Naive thymus-derived CD4-positive, alpha-beta T cell (primary cell): ENCODE measurements at regions of chr6 and their contacts with region 1.

Region 1: DNA sequence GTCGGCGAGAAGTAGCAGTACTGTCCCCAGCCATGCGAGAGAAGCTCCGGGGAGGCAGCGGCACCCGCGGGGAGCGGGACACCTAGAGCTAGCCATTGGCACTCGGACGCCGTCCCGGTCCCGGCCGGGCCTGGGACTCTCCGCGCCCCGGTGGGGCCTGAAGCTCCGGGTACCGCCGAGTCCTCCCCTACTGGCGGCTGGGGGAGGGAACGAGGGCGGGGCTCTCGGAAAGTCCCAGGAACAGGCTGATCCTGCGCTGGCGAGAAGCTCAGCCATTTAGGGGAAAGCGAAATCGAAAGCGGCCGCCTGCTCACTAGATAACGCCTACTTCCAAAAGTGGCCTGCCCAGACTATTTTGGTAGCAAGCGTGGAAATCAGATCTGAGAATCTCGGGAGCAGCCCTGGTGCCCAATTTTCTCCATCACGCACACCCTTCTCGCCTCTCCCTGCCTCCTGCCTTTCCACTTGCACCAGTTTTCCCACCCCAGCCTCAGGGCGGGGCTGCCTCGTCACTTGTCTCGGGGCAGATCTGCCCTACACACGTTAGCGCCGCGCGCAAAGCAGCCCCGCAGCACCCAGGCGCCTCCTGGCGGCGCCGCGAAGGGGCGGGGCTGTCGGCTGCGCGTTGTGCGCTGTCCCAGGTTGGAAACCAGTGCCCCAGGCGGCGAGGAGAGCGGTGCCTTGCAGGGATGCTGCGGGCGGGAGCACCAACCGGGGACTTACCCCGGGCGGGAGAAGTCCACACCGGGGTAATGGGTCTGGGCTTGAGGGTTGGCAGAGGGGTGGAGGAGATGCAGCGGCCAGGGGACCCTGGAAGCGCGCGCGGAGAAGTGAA is at the starts of genes PSMB9 and TAP1:
- DNase-seq: peak; percentile 92 to 97 (median 94)
- ATAC-seq: peak; percentile 92
- H3K4me3 ChIP-seq: peak within 1 kb of the TSS; percentile 91
- H3K4me3 Mint-ChIP-seq: peak within 1 kb of the TSS; percentile 96 to 100 (median 100)
- H3K27ac ChIP-seq: peak within 1 kb of the TSS; percentile 100
- H3K27ac Mint-ChIP-seq: peak within 1 kb of the TSS; percentile 97 to 100 (median 100)
- H3K4me1 ChIP-seq: peaks cover 45 to 57% of the 10 kb centered on the region in 2 donors
- H3K4me1 Mint-ChIP-seq: peaks cover 61 to 80% (median 72%) of the 10 kb centered on the region in 7 donors
- H3K27me3 ChIP-seq: no peaks in the 10 kb centered on the region
- H3K27me3 Mint-ChIP-seq: no peaks in the 10 kb centered on the region
- total RNA-seq, gene PSMB9: 70.3 to 452 (median 90.5) TPM
- total RNA-seq, gene TAP1: 92.1 to 500 (median 103) TPM

Region 2: DNA sequence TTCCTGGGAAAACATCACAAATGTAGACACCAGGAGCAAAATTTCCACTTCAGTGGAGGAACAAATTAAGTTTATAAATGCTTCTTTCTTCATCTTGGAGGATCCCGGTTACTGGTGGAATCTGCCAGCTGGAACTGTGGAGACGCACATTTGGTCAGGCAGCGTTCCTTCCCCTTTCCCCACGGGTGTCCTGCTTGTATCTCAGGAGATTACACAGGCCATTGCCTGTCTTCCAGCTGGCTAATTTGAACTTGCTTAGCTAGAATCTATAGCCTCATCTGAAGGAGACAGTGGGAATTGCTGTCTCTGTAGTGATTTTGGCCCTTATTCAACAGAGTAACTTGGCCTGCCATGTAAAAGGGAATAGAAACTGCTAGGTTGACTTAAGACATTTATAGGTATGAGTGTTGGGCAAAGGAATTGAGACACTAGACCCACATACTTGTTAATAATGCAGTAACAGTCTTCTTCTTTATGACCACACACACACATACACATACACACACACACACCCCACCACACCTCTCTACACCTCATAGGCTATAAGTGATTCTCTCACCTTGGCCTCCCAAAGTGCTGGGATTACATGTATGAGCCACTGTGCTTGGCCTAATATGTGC is 516.5 kb before region 1 on chr6:
- CTCF ChIA-PET with region 1: no interaction called
- POLR2A ChIA-PET with region 1: no interaction called
- intact Hi-C with region 1: no loop called
- DNase-seq: no peak
- ATAC-seq: no peak
- H3K4me3 ChIP-seq: no peak overlapping the region
- H3K4me3 Mint-ChIP-seq: no peak overlapping the region
- H3K27ac ChIP-seq: no peak overlapping the region
- H3K27ac Mint-ChIP-seq: no peak overlapping the region
- H3K4me1 ChIP-seq: no peaks in the 10 kb centered on the region
- H3K4me1 Mint-ChIP-seq: peaks cover 0 to under 1% (median 0%) of the 10 kb centered on the region in 7 donors
- H3K27me3 ChIP-seq: no peaks in the 10 kb centered on the region
- H3K27me3 Mint-ChIP-seq: peaks cover 0 to 60% (median 5%) of the 10 kb centered on the region in 5 donors

Region 3: DNA sequence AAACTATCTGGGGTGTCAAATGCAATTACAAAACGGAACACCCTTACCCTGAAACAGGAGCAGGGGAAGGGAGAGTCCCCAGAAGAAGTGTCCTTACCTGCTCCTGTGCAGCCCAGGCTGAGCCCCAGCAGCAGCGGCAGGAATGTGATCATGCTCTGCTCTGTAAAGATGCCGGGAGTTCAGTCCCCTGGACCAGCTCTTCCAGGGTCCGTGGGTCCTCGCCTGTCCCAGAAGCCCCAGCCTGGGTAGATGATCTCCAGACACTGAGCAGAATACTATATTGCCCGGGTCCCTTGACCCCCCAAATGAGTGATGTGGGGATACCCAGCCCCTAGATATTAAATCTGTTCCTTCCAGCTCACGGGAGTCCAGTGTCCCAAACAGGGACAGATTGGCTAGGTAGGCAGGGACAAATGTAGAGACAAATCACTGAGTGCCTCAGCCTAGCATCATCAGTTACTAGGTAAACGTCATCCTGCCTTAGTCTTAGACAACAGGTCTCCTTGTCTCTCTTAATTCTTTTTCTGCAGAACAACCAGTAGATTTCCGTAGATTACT is 87.0 kb after region 1 on chr6 and contains the start of gene HLA-DMB:
- CTCF ChIA-PET with region 1: interaction called, 12 read pairs
- POLR2A ChIA-PET with region 1: interaction called, 15 read pairs
- intact Hi-C with region 1: no loop called
- DNase-seq: peak in 7 of 9 donors; percentile 64 to 80 (median 74)
- ATAC-seq: peak; percentile 86
- H3K4me3 ChIP-seq: peak within 1 kb of the TSS; percentile 66
- H3K4me3 Mint-ChIP-seq: peak within 1 kb of the TSS; percentile 85 to 97 (median 94)
- H3K27ac ChIP-seq: peak within 1 kb of the TSS; percentile 75
- H3K27ac Mint-ChIP-seq: peak within 1 kb of the TSS; percentile 95 to 98 (median 96)
- H3K4me1 ChIP-seq: peaks cover 50 to 55% of the 10 kb centered on the region in 2 donors
- H3K4me1 Mint-ChIP-seq: peaks cover 55 to 67% (median 62%) of the 10 kb centered on the region in 7 donors
- H3K27me3 ChIP-seq: no peaks in the 10 kb centered on the region
- H3K27me3 Mint-ChIP-seq: peaks cover 0 to 7% (median 0%) of the 10 kb centered on the region in 5 donors
- total RNA-seq, gene HLA-DMB: 7.8 to 82.5 (median 9.1) TPM